Transverse colon (tissue), 4 donors: ENCODE measurements at regions of chr9 and their contacts with region 1.

Region 1: DNA sequence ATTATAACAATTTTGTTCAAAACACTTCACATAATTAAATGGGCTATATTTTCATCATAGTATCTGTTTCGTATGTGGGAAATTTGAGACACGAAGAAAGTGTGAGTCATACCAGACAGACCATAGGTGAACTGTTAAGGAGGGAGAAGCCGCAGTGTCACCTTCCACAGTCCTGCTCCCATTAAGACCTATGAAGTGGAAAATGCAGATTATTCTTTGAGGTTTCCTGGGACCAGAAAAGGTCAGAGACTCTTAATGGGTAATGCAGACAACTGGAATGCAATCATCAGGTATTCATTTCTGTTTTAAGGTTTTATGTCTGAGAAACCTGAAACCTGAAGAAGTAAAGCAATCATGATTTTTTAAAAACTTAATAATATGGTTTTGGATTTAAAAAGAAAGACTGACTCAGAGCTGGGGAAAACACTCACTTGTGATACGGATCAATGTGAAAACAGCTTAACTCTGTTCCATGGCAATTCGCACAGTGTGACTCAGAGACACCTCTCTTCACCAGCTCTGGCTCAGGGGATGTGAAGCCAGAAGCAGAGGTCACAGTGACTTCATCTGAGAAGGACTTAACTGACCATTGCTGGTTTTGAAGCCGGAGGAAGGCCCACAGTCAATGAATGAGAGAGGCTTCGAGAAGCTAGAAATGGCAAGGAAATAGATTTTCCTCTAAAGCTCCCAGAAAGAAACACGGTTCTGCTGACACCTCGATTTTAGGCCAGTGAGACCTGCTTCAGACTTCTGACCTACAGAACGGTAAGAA is 17.2 kb upstream of the GCNT1 start:
- DNase-seq: no peak
- H3K4me3 ChIP-seq: no peak overlapping the region
- H3K27ac ChIP-seq: no peak overlapping the region
- H3K4me1 ChIP-seq: no peaks in the 10 kb centered on the region
- H3K27me3 ChIP-seq: no peaks in the 10 kb centered on the region
- CTCF ChIP-seq: no peak
- EP300 ChIP-seq: no peak
- POLR2A ChIP-seq: no peak

Region 2: DNA sequence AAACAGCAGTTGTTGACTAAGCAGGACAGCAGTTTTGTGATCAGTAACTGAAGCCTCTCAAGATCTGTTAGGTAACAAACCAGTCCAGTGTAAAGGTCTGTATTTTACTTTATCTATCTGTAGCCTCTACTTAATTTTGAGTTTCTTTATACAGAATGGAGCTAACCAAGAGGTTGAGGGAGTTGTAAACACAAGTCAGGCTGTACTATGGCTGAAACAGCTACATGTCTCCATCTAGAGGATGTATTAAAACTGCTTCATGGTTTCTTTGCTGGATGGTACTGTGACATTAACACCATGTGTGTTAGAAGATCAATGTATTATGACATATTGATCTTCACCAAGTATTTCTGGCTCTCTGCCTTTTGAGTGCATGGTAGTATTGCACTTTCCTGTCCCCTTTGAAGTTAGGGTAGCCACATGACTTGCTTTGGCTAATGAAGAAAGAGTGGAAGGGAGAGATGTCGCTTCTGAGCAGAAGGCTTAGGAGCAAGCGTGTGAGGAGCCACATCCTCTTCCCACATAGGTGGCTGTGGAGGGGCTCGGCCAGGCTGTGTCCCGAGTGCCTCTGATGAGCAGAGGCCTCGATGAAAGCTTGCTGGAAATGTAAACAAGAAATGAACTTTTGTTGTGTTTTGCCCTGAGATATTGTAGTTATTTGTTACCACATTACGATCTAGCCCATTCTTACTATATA is 216.9 kb after region 1 on chr9:
- in situ Hi-C with region 1: loop called in 1 of 4 experiments (anchors 10 kb)
- intact Hi-C with region 1: no loop called
- DNase-seq: no peak
- H3K4me3 ChIP-seq: no peak overlapping the region
- H3K27ac ChIP-seq: peak overlapping the region in 1 of 4 donors; percentile 24
- H3K4me1 ChIP-seq: peaks cover 0 to 35% (median 8%) of the 10 kb centered on the region in 4 donors
- H3K27me3 ChIP-seq: no peaks in the 10 kb centered on the region
- CTCF ChIP-seq: peak; percentile 29 to 72 (median 55)
- EP300 ChIP-seq: no peak
- POLR2A ChIP-seq: no peak

Region 3: DNA sequence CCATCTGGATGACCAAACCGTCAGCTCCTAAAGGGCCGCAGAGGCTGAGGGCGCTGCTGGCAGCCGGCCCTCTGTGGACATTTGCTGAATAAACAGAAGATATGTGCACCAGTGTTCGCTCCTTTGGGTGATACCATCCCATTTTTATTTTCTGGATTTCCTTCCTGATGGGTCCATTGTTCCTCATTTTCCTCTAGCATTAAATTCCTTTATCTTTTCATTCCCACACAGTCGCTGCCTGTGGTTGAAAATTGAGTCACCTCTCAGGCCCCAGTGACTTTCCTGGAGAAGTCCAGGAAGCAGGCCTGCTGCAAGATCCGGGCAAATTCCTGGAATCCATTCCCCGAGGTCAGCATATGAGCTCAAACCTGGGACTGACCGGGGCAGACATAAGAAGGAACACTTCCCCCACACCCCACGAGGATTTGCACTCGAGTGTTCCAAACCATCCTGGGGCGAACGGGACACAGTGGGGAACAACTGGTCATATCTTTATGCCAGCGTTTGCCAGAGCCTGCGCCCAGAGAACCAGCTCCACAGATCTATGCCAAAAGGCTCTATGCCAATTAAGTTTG is 235.8 kb after region 1 on chr9:
- in situ Hi-C with region 1: no loop called
- intact Hi-C with region 1: no loop called
- DNase-seq: no peak
- H3K4me3 ChIP-seq: no peak overlapping the region
- H3K27ac ChIP-seq: peak overlapping the region in 1 of 4 donors; percentile 21
- H3K4me1 ChIP-seq: peaks cover 0 to 12% (median 0%) of the 10 kb centered on the region in 4 donors
- H3K27me3 ChIP-seq: no peaks in the 10 kb centered on the region
- CTCF ChIP-seq: no peak
- EP300 ChIP-seq: no peak
- POLR2A ChIP-seq: no peak

Region 4: DNA sequence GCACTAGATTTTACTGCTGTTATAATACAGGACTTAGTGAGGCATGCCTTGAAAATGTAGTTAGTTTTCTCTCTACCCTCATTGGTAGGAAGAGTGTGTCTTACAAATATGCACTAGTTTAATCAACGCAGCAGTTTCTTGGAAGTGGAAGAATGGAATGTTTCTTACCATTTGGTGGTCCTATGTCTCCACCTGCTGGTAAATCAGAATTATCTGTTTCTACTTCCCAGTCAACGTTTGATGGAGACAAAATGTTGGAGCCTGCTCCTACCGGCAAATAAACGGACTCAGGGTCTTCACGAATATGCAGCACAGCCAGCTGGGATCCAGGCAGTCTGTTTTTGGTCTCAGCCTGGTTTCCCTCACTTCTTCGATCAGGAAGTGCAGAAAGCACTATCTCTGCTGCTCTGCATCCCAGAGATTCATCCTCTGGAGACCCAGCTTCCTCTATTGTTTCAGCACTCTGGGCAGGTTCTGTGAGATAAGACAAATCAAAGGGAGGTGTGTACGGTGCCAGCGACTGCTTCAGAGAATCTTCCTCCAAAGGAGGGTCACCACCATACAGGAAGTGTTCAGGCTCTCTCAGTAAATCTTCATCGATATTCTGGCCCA is 263.0 kb after region 1 on chr9:
- in situ Hi-C with region 1: loop called in 3 of 4 experiments (anchors 5 to 25 kb)
- intact Hi-C with region 1: no loop called
- DNase-seq: no peak
- H3K4me3 ChIP-seq: no peak overlapping the region
- H3K27ac ChIP-seq: no peak overlapping the region
- H3K4me1 ChIP-seq: peaks cover 0 to 2% (median 0%) of the 10 kb centered on the region in 4 donors
- H3K27me3 ChIP-seq: peaks cover 11% of the 10 kb centered on the region
- CTCF ChIP-seq: peak; percentile 54 to 75 (median 58)
- EP300 ChIP-seq: no peak
- POLR2A ChIP-seq: no peak

Region 5: GRCh38 chr9:77011973-77012821 is 570.5 kb after region 1 on chr9:
- in situ Hi-C with region 1: loop called in 2 of 4 experiments (anchors 25 kb)
- intact Hi-C with region 1: no loop called
- DNase-seq: peak; percentile 71
- H3K4me3 ChIP-seq: peak overlapping the region in 1 of 4 donors; percentile 18
- H3K27ac ChIP-seq: no peak overlapping the region
- H3K4me1 ChIP-seq: peaks cover 0 to 33% (median 15%) of the 10 kb centered on the region in 4 donors
- H3K27me3 ChIP-seq: peaks cover 100% of the 10 kb centered on the region
- CTCF ChIP-seq: peak; percentile 68 to 89 (median 80)
- EP300 ChIP-seq: no peak
- POLR2A ChIP-seq: no peak

Region 6: DNA sequence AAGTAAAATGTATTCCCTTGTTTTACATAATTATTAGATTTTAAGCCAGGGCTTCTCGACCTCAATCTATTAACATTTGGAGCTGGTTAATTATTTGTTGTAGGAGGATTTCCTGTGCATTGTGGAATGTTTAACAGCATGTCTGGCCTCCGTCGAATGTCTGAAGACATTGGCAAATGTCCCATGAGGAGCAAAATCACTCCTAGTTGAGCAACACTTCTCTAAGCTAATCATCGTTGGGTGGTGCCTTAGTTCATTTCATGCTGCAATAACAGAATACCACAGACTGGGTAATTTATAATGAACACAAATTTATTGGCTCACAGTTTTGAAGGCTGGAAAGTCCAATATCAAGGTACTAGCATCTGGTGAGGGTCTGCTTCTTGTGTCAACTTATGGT is 722.1 kb after region 1 on chr9:
- in situ Hi-C with region 1: no loop called
- intact Hi-C with region 1: loop called (anchors 10 kb)
- DNase-seq: no peak
- H3K4me3 ChIP-seq: no peak overlapping the region
- H3K27ac ChIP-seq: no peak overlapping the region
- H3K4me1 ChIP-seq: peaks cover 0 to 4% (median 0%) of the 10 kb centered on the region in 4 donors
- H3K27me3 ChIP-seq: no peaks in the 10 kb centered on the region
- CTCF ChIP-seq: no peak
- EP300 ChIP-seq: no peak
- POLR2A ChIP-seq: no peak